Posterior vena cava (tissue), 2 donors: ENCODE measurements at regions of chr14 and their contacts with region 1.

Region 1: GRCh38 chr14:58765418-58765831 is 127.7 kb downstream of the DACT1 start:
- DNase-seq: no peak

Region 2: GRCh38 chr14:58713677-58714076 is 51.7 kb before region 1 on chr14:
- intact Hi-C with region 1: loop called in 1 of 2 experiments (anchors 2 kb)
- DNase-seq: no peak

Region 3: GRCh38 chr14:59754256-59754655 is 988.8 kb after region 1 on chr14:
- intact Hi-C with region 1: no loop called
- DNase-seq: no peak